Activated T-helper 1 cell treated with anti-CD3 and anti-CD28 coated beads, Interleukin-12 subunit alpha, Interleukin-12 subunit beta, Interleukin-2, Interleukin-4 antibody, amounts not matched to agents 30 ng/mL and 10 ng/mL and 1 ng/mL, durations not matched to agents 14 hours and 24 hours and 36 hours (primary cell): ENCODE measurements at regions of chr2 and their contacts with region 1.

Region 1: GRCh38 chr2:134668821-134669220 is 50.0 kb downstream of the TMEM163 start:
- DNase-seq: peak; percentile 74
- H3K4me3 Mint-ChIP-seq: peak overlapping the region; percentile 37
- H3K27ac Mint-ChIP-seq: peak overlapping the region; percentile 47
- H3K4me1 Mint-ChIP-seq: peaks cover 59% of the 10 kb centered on the region
- H3K27me3 Mint-ChIP-seq: peaks cover 34% of the 10 kb centered on the region

Region 2: GRCh38 chr2:134411828-134412638 is 256.8 kb before region 1 on chr2:
- intact Hi-C with region 1: no loop called
- DNase-seq: peak; percentile 62
- H3K4me3 Mint-ChIP-seq: no peak overlapping the region
- H3K27ac Mint-ChIP-seq: no peak overlapping the region
- H3K4me1 Mint-ChIP-seq: peaks cover 28% of the 10 kb centered on the region
- H3K27me3 Mint-ChIP-seq: no peaks in the 10 kb centered on the region

Region 3: GRCh38 chr2:134623796-134624195 is 45.0 kb before region 1 on chr2:
- intact Hi-C with region 1: loop called (anchors 2 kb)
- DNase-seq: no peak
- H3K4me3 Mint-ChIP-seq: no peak overlapping the region
- H3K27ac Mint-ChIP-seq: no peak overlapping the region
- H3K4me1 Mint-ChIP-seq: peaks cover 9% of the 10 kb centered on the region
- H3K27me3 Mint-ChIP-seq: peaks cover 6% of the 10 kb centered on the region

Region 4: GRCh38 chr2:134634054-134634753 is 34.6 kb before region 1 on chr2:
- intact Hi-C with region 1: no loop called
- DNase-seq: no peak
- H3K4me3 Mint-ChIP-seq: no peak overlapping the region
- H3K27ac Mint-ChIP-seq: no peak overlapping the region
- H3K4me1 Mint-ChIP-seq: no peaks in the 10 kb centered on the region
- H3K27me3 Mint-ChIP-seq: peaks cover 3% of the 10 kb centered on the region

Region 5: GRCh38 chr2:134683561-134684112 is 14.8 kb after region 1 on chr2:
- intact Hi-C with region 1: loop called (anchors 1 kb)
- DNase-seq: no peak
- H3K4me3 Mint-ChIP-seq: no peak overlapping the region
- H3K27ac Mint-ChIP-seq: no peak overlapping the region
- H3K4me1 Mint-ChIP-seq: peaks cover 53% of the 10 kb centered on the region
- H3K27me3 Mint-ChIP-seq: peaks cover 12% of the 10 kb centered on the region